ENCODE measurements at regions of chr19 and their contacts with region 1.

Region 1: GRCh38 chr19:44770550-44771257 is 7.0 kb upstream of the CBLC start:
- DNase-seq: peak; percentile 94
- ATAC-seq: peak; percentile 99

Region 2: GRCh38 chr19:44635581-44636438 is 134.9 kb before region 1 on chr19:
- intact Hi-C with region 1: no loop called
- DNase-seq: no peak
- ATAC-seq: peak; percentile 58

Region 3: GRCh38 chr19:44694184-44694579 is 76.5 kb before region 1 on chr19:
- intact Hi-C with region 1: loop called (anchors 5 kb)
- DNase-seq: no peak
- ATAC-seq: no peak

Region 4: GRCh38 chr19:44712864-44713515 is 57.7 kb before region 1 on chr19:
- intact Hi-C with region 1: no loop called
- DNase-seq: no peak
- ATAC-seq: no peak

Region 5: DNA sequence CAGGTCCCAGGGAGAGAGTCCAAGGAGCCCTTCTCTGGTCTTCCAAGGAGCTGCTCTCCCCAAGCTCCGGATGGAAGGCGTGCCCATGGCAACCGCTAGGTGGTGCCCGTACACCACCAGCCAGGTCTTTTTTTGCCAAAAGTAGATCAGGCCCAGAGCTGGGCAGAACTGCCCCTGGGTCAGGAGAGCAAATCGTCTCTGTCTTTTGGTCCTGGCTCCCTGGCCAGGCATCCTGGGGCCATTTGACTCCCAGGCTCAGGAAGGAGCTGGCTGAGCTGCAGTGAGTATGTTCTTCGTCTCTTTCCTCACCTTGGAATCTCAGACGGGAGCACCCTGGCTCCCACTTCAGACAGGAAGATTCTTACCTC is 46.8 kb before region 1 on chr19:
- intact Hi-C with region 1: loop called (anchors 2 kb)
- DNase-seq: peak; percentile 90
- ATAC-seq: peak; percentile 96

Region 6: GRCh38 chr19:44737238-44738071 is 33.2 kb before region 1 on chr19:
- intact Hi-C with region 1: no loop called
- DNase-seq: no peak
- ATAC-seq: no peak